ENCODE measurements at regions of chr1 and their contacts with region 1.

Region 1: GRCh38 chr1:175118375-175119367 is 51.0 kb downstream of the TNN start:
- DNase-seq: no peak
- ATAC-seq: no peak
- H3K4me3 ChIP-seq: no peak overlapping the region
- H3K27ac ChIP-seq: no peak overlapping the region
- H3K4me1 ChIP-seq: no peaks in the 10 kb centered on the region
- H3K27me3 ChIP-seq: no peaks in the 10 kb centered on the region
- CTCF ChIP-seq: no peak
- POLR2A ChIP-seq: no peak

Region 2: GRCh38 chr1:175035865-175036264 is 82.8 kb before region 1 on chr1:
- intact Hi-C with region 1: loop called (anchors 5 kb)
- DNase-seq: no peak
- ATAC-seq: no peak
- H3K4me3 ChIP-seq: no peak overlapping the region
- H3K27ac ChIP-seq: no peak overlapping the region
- H3K4me1 ChIP-seq: no peaks in the 10 kb centered on the region
- H3K27me3 ChIP-seq: no peaks in the 10 kb centered on the region
- CTCF ChIP-seq: no peak
- POLR2A ChIP-seq: no peak

Region 3: DNA sequence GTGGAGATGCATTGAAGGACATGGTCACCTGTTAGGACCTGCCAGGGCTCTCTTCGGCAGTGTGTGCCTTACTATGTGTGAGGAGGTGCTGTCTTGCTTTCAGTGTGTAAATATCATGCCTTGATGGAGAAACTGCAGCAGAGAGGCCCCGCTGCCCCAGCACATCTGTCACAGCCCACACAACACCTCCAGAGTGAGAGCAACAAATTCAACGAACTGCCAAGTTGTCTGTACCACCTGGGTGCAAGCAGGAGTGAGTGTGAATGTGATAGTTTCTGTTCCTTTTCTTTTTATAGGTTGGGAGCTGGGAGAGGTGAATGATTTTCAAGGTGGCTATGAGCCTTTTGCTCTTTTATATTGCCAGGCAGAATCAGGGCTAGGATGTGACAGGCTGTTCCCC is 188.5 kb after region 1 on chr1:
- intact Hi-C with region 1: no loop called
- DNase-seq: no peak
- ATAC-seq: no peak
- H3K4me3 ChIP-seq: no peak overlapping the region
- H3K27ac ChIP-seq: no peak overlapping the region
- H3K4me1 ChIP-seq: no peaks in the 10 kb centered on the region
- H3K27me3 ChIP-seq: no peaks in the 10 kb centered on the region
- CTCF ChIP-seq: no peak
- POLR2A ChIP-seq: no peak

Region 4: DNA sequence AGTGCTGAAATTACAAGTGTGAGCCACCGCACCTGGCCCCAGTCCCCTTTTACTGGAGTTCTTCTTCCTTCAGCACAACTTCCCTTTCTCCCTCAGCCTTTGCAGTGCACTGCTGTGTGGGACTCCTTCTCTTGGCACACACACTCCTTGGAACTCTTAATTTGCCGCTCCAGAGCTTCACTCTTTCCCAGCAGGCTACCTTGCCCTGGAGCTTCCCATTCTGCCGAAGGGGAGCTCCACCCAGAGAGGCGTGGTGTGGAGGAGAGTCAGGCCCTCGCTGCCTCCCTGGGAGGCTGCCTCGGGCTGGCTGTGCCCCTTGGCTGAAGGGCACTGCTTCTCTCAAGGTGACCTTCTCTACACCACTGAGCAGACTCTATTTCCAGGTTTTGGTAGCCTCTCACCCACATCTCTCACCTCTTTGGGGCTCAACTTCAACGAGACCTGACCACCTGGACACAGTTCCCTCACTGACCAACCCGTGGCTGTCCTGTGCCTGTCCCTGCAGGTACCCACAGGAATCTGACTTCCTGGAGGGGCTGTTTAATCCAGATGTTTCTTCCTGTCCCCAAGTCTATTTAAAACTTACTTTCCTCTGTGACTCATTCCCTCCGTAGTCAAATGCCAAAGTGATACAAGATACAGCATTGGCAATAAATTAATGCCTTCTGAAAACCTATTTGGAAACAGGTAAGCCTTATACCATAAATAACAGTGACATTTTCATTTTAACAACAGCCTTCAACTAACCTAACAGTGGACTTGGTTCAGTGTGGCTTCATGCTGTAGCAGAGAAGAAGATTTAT is 301.3 kb after region 1 on chr1:
- intact Hi-C with region 1: no loop called
- DNase-seq: peak in 1 of 4 donors; percentile 21
- ATAC-seq: no peak
- H3K4me3 ChIP-seq: no peak overlapping the region
- H3K27ac ChIP-seq: peak overlapping the region in 1 of 4 donors; percentile 39
- H3K4me1 ChIP-seq: peaks cover 8% of the 10 kb centered on the region
- H3K27me3 ChIP-seq: no peaks in the 10 kb centered on the region
- CTCF ChIP-seq: no peak
- POLR2A ChIP-seq: no peak